Gastrocnemius medialis (tissue), 4 donors: ENCODE measurements at regions of chr13 and their contacts with region 1.

Region 1: GRCh38 chr13:79423801-79424642 is 18.0 kb upstream of the RBM26 start:
- DNase-seq: no peak
- ATAC-seq: peak in 1 of 2 donors; percentile 56
- H3K4me3 ChIP-seq: no peak overlapping the region
- H3K27ac ChIP-seq: no peak overlapping the region
- H3K4me1 ChIP-seq: no peaks in the 10 kb centered on the region
- H3K27me3 ChIP-seq: no peaks in the 10 kb centered on the region
- CTCF ChIP-seq: peak; percentile 48 to 71 (median 69)
- POLR2A ChIP-seq: no peak

Region 2: GRCh38 chr13:79480954-79481684 is 57.1 kb after region 1 on chr13 and contains the start of gene NDFIP2:
- in situ Hi-C with region 1: no loop called
- intact Hi-C with region 1: loop called (anchors 5 kb)
- DNase-seq: peak; percentile 62 to 80
- ATAC-seq: peak; percentile 81 to 84
- H3K4me3 ChIP-seq: peak within 1 kb of the TSS; percentile 80 to 97 (median 86)
- H3K27ac ChIP-seq: peak within 1 kb of the TSS; percentile 80 to 88 (median 86)
- H3K4me1 ChIP-seq: peaks cover 48 to 49% of the 10 kb centered on the region in 2 donors
- H3K27me3 ChIP-seq: no peaks in the 10 kb centered on the region
- CTCF ChIP-seq: peak in 1 of 5 experiments; percentile 22
- POLR2A ChIP-seq: peak; percentile 54 to 70
- total RNA-seq, gene NDFIP2: 21.8 to 47.8 (median 31.9) TPM

Region 3: GRCh38 chr13:79936368-79937136 is 512.5 kb after region 1 on chr13:
- in situ Hi-C with region 1: no loop called
- intact Hi-C with region 1: no loop called
- DNase-seq: no peak
- ATAC-seq: peak; percentile 54 to 72
- H3K4me3 ChIP-seq: no peak overlapping the region
- H3K27ac ChIP-seq: peak overlapping the region in 3 of 4 donors; percentile 35 to 52 (median 43)
- H3K4me1 ChIP-seq: peaks cover 6 to 10% of the 10 kb centered on the region in 2 donors
- H3K27me3 ChIP-seq: no peaks in the 10 kb centered on the region
- CTCF ChIP-seq: no peak
- POLR2A ChIP-seq: no peak